Activated CD4-positive, alpha-beta memory T cell treated with anti-CD3 and anti-CD28 coated beads, Interleukin-2, amount 10 ng/mL, durations not matched to agents 7 days and 5 days (primary cell): ENCODE measurements at regions of chr16 and their contacts with region 1.

Region 1: DNA sequence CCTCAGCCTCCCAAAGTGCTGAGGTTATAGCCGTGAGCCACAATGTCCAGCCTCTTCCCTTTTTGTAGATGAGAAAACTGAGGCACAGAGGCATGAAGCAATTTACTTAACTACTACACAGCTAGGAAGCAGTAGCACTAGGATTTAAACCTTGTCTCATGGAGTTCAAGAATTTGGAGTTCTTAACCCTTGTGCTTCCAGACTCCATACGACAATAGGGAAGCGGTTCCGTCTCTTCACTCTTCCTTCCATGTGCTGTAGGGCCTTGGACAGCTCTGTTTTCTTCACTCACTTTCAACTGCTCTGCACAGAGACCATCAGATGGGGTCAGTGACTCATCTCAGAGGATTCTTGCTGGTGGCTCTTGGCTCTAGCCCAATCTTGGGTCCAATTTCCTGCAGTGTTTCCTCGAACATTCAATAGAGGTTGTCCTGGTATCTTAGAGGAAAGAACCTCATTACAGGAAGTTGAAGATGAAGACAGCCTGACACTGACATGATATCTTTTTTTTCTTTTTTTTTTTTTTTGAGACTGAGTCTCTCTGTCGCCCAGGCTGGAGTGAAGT is 19.3 kb downstream of the ITGAL start:
- DNase-seq: peak; percentile 44
- H3K4me3 Mint-ChIP-seq: no peak overlapping the region
- H3K27ac Mint-ChIP-seq: peak overlapping the region; percentile 66
- H3K4me1 Mint-ChIP-seq: peaks cover 47% of the 10 kb centered on the region
- H3K27me3 Mint-ChIP-seq: no peaks in the 10 kb centered on the region

Region 2: GRCh38 chr16:30142672-30143346 is 349.0 kb before region 1 on chr16:
- CTCF ChIA-PET with region 1: no interaction called
- POLR2A ChIA-PET with region 1: no interaction called
- DNase-seq: peak; percentile 36
- H3K4me3 Mint-ChIP-seq: no peak overlapping the region
- H3K27ac Mint-ChIP-seq: no peak overlapping the region
- H3K4me1 Mint-ChIP-seq: peaks cover 18% of the 10 kb centered on the region
- H3K27me3 Mint-ChIP-seq: no peaks in the 10 kb centered on the region

Region 3: GRCh38 chr16:30472328-30472942 is 19.4 kb before region 1 on chr16 and contains the start of gene ITGAL:
- CTCF ChIA-PET with region 1: interaction called, 3 read pairs
- POLR2A ChIA-PET with region 1: interaction called, 185 read pairs
- DNase-seq: peak; percentile 92
- H3K4me3 Mint-ChIP-seq: peak within 1 kb of the TSS; percentile 98
- H3K27ac Mint-ChIP-seq: peak within 1 kb of the TSS; percentile 96
- H3K4me1 Mint-ChIP-seq: peaks cover 58% of the 10 kb centered on the region
- H3K27me3 Mint-ChIP-seq: no peaks in the 10 kb centered on the region
- total RNA-seq, gene ITGAL: 583 to 586 TPM

Region 4: GRCh38 chr16:30509081-30509765 is 17.4 kb after region 1 on chr16:
- CTCF ChIA-PET with region 1: no interaction called
- POLR2A ChIA-PET with region 1: interaction called, 78 read pairs
- DNase-seq: no peak
- H3K4me3 Mint-ChIP-seq: no peak overlapping the region
- H3K27ac Mint-ChIP-seq: peak overlapping the region; percentile 19
- H3K4me1 Mint-ChIP-seq: peaks cover 9% of the 10 kb centered on the region
- H3K27me3 Mint-ChIP-seq: no peaks in the 10 kb centered on the region

Region 5: DNA sequence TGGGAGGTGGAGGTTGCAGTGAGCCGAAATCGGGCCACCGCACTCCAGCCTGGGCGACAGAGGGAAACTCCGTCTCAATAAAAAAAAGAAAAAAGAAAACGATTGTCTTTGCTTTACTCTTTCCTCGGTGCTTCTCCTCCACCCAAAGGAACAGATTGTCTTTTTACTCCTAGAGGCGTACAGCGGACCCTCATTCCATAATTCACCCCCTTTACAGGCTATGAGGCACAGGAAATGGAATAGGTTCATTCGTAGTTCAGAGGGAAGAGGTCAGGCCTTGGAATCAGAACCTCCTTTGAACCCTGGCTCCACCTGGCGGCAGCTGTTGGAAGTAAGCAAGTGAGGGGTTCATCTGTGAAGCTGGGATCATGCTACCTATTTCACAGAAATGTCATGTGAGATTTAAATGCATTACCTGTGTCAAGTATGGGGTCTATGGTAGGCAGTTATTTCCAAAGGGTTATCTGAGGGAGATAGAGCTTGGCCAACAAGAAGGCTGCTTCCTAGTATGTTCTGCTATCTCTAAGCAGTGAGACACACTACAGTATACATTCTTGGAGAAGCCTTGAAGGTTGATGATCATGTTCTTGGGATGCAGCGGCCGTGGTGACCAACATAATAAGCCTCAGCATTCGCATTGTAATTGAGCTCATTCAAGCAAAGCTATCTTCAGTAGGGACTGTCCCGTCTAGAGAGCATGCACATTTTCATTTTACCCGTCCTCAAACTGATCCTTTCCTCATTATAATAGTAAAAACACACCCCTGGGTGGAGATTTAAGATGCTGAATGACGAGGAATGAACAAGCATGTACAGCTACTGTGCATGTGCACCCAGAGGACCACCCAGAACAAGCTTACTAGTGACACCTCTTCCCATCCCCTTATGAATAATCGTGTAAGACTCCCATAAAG is 137.1 kb after region 1 on chr16:
- CTCF ChIA-PET with region 1: no interaction called
- POLR2A ChIA-PET with region 1: no interaction called
- DNase-seq: peak; percentile 90
- H3K4me3 Mint-ChIP-seq: peak overlapping the region; percentile 63
- H3K27ac Mint-ChIP-seq: peak overlapping the region; percentile 53
- H3K4me1 Mint-ChIP-seq: peaks cover 16% of the 10 kb centered on the region
- H3K27me3 Mint-ChIP-seq: peaks cover 2% of the 10 kb centered on the region